ENCODE measurements at regions of chr16 and their contacts with region 1.

Region 1: GRCh38 chr16:15765880-15766279 is 90.9 kb downstream of the MYH11 start:
- DNase-seq: peak; percentile 55
- ATAC-seq: peak; percentile 99
- H3K4me3 ChIP-seq: no peak overlapping the region
- H3K27ac ChIP-seq: no peak overlapping the region
- H3K4me1 ChIP-seq: peaks cover 0 to 3% of the 10 kb centered on the region in 2 experiments; a peak in 2 of 4 replicates
- H3K27me3 ChIP-seq: no peaks in the 10 kb centered on the region
- CTCF ChIP-seq: peak; percentile 81 to 84 (median 84)
- POLR2A ChIP-seq: no peak
- RAD21 ChIP-seq: peak; percentile 88

Region 2: DNA sequence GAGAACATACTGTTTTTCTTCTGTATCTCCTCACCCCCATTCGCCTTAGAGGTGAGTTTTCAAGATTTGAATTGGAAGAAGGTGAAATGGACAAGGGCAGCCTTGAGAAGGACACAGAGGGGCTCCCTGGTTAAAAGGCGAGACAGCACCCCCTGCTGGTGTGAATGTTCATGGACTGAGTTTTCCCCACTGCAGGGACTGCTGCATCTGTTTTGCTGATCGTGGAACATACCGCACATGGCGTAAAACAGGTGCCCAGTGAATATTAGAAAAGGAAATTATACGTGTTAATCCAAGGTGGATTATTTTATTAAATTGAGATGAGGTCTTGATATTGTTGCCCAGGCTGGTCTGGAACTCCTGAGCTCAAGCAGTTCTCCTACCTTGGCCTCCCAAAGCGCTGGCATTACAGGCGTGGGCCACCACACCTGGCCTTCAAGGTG is 61.3 kb before region 1 on chr16:
- CTCF ChIA-PET with region 1: no interaction called
- POLR2A ChIA-PET with region 1: no interaction called
- RAD21 ChIA-PET with region 1: no interaction called
- intact Hi-C with region 1: loop called (anchors 10 kb)
- DNase-seq: peak; percentile 39
- ATAC-seq: peak; percentile 93
- H3K4me3 ChIP-seq: no peak overlapping the region
- H3K27ac ChIP-seq: no peak overlapping the region
- H3K4me1 ChIP-seq: no peaks in the 10 kb centered on the region
- H3K27me3 ChIP-seq: no peaks in the 10 kb centered on the region
- CTCF ChIP-seq: peak; percentile 64 to 90 (median 84); a peak in 5 of 6 replicates
- POLR2A ChIP-seq: no peak
- RAD21 ChIP-seq: peak; percentile 82

Region 3: GRCh38 chr16:15822957-15823356 is 57.1 kb after region 1 on chr16:
- CTCF ChIA-PET with region 1: interaction called, 6 read pairs
- POLR2A ChIA-PET with region 1: no interaction called
- RAD21 ChIA-PET with region 1: interaction called in 1 of 2 experiments, 3 read pairs
- intact Hi-C with region 1: loop called (anchors 5 kb)
- DNase-seq: no peak
- ATAC-seq: no peak
- H3K4me3 ChIP-seq: no peak overlapping the region
- H3K27ac ChIP-seq: no peak overlapping the region
- H3K4me1 ChIP-seq: no peaks in the 10 kb centered on the region
- H3K27me3 ChIP-seq: no peaks in the 10 kb centered on the region
- CTCF ChIP-seq: no peak
- POLR2A ChIP-seq: no peak
- RAD21 ChIP-seq: no peak

Region 4: DNA sequence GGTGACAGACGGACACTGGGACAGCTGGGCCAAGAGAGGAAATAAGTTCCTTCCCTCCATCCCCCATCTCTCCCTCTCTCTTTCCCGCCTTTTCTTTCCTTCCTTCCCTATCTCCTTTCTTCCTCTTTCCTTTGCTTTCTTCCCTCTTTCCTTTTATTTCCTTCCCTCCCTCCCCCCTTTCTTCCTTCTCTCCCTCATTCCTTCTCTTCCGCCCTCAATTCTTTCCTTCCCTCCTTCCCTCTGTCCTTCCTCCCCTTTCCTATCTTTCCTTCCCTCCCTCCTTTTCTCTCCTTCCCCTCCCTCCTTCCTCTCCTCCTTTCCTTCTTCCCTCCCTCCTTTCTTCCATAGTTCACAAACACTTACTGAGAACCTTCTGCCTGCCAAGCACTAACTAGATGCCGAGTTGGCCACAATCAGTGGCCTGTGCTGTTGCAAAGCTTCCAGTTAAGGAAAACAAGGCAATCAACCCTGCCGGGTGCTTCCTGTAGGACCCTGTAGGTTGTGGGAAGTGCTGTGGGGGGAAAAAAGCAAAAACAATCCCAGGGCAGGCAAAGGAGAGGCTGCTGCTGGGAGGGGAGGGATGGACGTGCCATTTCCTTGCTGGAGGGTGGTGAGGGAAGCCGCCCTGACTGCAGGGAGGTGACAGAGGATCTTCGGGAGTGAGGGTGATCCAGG is 425.8 kb after region 1 on chr16:
- CTCF ChIA-PET with region 1: no interaction called
- POLR2A ChIA-PET with region 1: no interaction called
- RAD21 ChIA-PET with region 1: no interaction called
- intact Hi-C with region 1: loop called (anchors 5 kb)
- DNase-seq: no peak
- ATAC-seq: no peak
- H3K4me3 ChIP-seq: no peak overlapping the region
- H3K27ac ChIP-seq: no peak overlapping the region
- H3K4me1 ChIP-seq: peaks cover 0 to 6% of the 10 kb centered on the region in 2 experiments; a peak in 2 of 4 replicates
- H3K27me3 ChIP-seq: no peaks in the 10 kb centered on the region
- CTCF ChIP-seq: no peak
- POLR2A ChIP-seq: no peak
- RAD21 ChIP-seq: no peak